ENCODE measurements at regions of chr5 and their contacts with region 1.

Region 1: GRCh38 chr5:128498844-128499455 is 39.1 kb downstream of the FBN2 start:
- DNase-seq: peak; percentile 80
- H3K4me3 ChIP-seq: no peak overlapping the region
- H3K27ac ChIP-seq: no peak overlapping the region
- H3K4me1 ChIP-seq: no peaks in the 10 kb centered on the region
- H3K27me3 ChIP-seq: no peaks in the 10 kb centered on the region

Region 2: DNA sequence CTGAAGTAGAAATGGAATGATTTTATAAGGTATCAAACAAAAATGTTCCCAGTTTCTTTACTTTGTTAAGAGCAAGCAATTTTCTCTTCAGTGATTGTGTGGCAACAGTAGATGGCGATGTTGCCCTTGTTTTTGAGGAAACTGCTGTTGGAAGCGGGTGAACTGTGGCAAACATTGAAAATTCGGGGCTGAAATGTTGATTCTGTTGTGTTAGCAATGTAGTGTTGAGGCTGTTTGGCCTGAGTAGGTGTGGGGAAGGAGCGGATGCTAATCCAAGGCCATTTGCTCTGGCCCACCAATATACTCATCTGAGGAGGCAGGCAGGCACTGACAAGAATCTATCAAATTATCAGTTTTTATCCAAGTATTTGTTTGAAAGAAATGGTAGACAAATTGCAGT is 285.6 kb before region 1 on chr5:
- in situ Hi-C with region 1: loop called (anchors 10 kb)
- DNase-seq: peak; percentile 80
- H3K4me3 ChIP-seq: no peak overlapping the region
- H3K27ac ChIP-seq: no peak overlapping the region
- H3K4me1 ChIP-seq: peaks cover 15% of the 10 kb centered on the region
- H3K27me3 ChIP-seq: no peaks in the 10 kb centered on the region

Measured in GM23248 (cell line).